ENCODE measurements at regions of chr11 and their contacts with region 1.

Region 1: DNA sequence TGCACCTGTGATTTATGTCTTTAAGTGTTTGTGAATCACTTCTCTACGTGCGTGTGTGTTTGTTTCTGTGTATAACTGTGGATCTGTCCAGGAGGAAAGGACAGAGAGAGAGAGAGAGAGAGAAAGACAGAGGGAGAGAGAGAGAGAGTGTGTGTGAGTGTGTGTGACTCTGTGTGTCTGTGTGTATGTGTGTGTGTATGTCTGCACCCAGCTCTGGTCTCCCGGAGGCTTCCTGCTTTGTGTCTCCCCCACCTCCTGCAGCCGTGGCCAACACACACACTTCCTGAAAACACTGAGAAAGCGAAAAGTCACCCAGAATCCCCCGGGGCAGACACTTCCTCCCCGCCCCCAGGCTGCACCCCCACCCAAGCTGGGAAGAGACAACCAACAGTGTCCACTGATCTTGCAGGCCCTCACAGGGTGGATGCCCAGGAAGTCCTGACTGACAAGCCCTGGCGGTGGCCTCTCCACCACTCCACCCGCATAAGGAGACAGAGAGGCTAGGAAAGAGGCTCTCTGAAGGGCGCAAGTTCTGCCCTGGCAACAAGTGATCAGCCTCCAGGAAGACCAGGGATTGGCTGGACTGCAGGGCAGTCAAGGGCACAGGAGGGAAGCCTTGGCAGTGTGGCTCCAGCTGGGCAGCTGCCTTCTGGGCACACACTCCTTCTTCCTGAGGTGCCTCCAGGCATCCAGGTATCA is 30.0 kb downstream of the ARAP1 start:
- DNase-seq: peak; percentile 90 to 97 (median 95)
- H3K4me3 ChIP-seq: peak overlapping the region; percentile 34 to 80 (median 74)
- H3K27ac ChIP-seq: peak overlapping the region; percentile 73 to 88
- H3K4me1 ChIP-seq: peaks cover 19 to 76% (median 62%) of the 10 kb centered on the region in 4 experiments
- H3K27me3 ChIP-seq: no peaks in the 10 kb centered on the region

Region 2: GRCh38 chr11:72541257-72541974 is 180.8 kb before region 1 on chr11:
- CTCF ChIA-PET with region 1: no interaction called
- POLR2A ChIA-PET with region 1: no interaction called
- DNase-seq: no peak
- H3K4me3 ChIP-seq: no peak overlapping the region
- H3K27ac ChIP-seq: no peak overlapping the region
- H3K4me1 ChIP-seq: no peaks in the 10 kb centered on the region
- H3K27me3 ChIP-seq: peaks cover 0 to 5% (median 2%) of the 10 kb centered on the region in 5 experiments

Region 3: GRCh38 chr11:72657411-72658100 is 64.6 kb before region 1 on chr11:
- CTCF ChIA-PET with region 1: no interaction called
- POLR2A ChIA-PET with region 1: no interaction called
- DNase-seq: no peak
- H3K4me3 ChIP-seq: no peak overlapping the region
- H3K27ac ChIP-seq: no peak overlapping the region
- H3K4me1 ChIP-seq: no peaks in the 10 kb centered on the region
- H3K27me3 ChIP-seq: peaks cover 0 to 5% (median 0%) of the 10 kb centered on the region in 5 experiments

Region 4: GRCh38 chr11:72710278-72710677 is 11.9 kb before region 1 on chr11:
- CTCF ChIA-PET with region 1: no interaction called
- POLR2A ChIA-PET with region 1: no interaction called
- DNase-seq: no peak
- H3K4me3 ChIP-seq: no peak overlapping the region
- H3K27ac ChIP-seq: no peak overlapping the region
- H3K4me1 ChIP-seq: no peaks in the 10 kb centered on the region
- H3K27me3 ChIP-seq: no peaks in the 10 kb centered on the region

Region 5: GRCh38 chr11:72736452-72737069 is 14.4 kb after region 1 on chr11:
- CTCF ChIA-PET with region 1: interaction called, 108 read pairs
- POLR2A ChIA-PET with region 1: interaction called, 3 read pairs
- DNase-seq: peak; percentile 91 to 98 (median 97)
- H3K4me3 ChIP-seq: peak overlapping the region in 4 of 7 experiments; percentile 40 to 62 (median 52)
- H3K27ac ChIP-seq: peak overlapping the region; percentile 87 to 93
- H3K4me1 ChIP-seq: peaks cover 8 to 78% (median 65%) of the 10 kb centered on the region in 4 experiments
- H3K27me3 ChIP-seq: no peaks in the 10 kb centered on the region

Region 6: GRCh38 chr11:72772978-72773690 is 50.9 kb after region 1 on chr11:
- CTCF ChIA-PET with region 1: interaction called, 12 read pairs
- POLR2A ChIA-PET with region 1: interaction called, 3 read pairs
- DNase-seq: peak in 2 of 3 donors; percentile 37 to 50
- H3K4me3 ChIP-seq: no peak overlapping the region
- H3K27ac ChIP-seq: no peak overlapping the region
- H3K4me1 ChIP-seq: peaks cover 0 to 33% (median 4%) of the 10 kb centered on the region in 4 experiments
- H3K27me3 ChIP-seq: no peaks in the 10 kb centered on the region

Region 7: DNA sequence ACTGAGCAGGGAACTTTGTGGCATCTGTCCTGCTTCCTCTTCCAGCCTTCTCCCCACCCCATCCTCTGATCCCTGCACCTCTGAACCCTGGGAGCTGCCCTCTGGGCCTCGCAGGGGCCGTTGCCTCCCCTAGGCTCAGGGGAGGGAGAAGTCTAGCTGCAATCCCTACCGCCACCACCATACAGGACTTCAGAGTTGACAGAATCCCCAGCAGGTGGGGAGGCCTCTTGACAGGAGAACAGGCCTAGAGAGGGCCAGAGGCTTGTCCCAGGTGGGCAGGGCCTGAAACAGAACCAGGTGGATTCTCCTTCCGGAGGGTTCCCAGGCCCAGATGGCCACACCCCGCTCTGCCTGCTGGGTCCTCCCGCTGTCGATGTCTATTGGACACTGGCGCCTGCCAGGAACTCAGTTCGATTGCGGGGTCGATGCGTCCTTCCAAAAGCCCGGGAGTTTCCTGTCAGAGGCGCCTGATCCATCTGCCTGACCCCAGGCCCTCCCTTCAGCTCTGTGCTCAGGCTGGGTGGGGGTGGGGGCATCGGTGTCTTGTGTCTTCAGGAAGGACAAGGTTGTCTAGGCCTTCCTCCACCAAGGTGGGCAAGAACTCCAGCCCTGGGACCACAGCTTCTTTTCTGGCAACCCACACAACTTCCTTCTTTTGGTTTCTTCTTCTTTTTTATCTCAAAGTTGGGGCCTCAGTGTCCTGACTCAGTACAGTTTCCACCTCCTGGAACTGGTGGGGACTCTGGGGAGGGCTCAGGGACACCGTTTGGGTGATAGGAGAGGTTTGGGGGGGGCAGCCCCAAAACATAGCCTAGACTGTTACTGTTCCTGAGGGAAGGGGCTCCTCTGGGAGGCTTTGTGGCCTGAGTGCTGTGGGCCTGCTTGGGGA is 65.3 kb after region 1 on chr11:
- CTCF ChIA-PET with region 1: interaction called, 118 read pairs
- POLR2A ChIA-PET with region 1: interaction called, 3 read pairs
- DNase-seq: peak in 2 of 3 donors; percentile 80 to 83
- H3K4me3 ChIP-seq: peak overlapping the region in 4 of 7 experiments; percentile 9 to 48 (median 29)
- H3K27ac ChIP-seq: peak overlapping the region; percentile 12 to 76
- H3K4me1 ChIP-seq: peaks cover 1 to 36% (median 35%) of the 10 kb centered on the region in 4 experiments
- H3K27me3 ChIP-seq: no peaks in the 10 kb centered on the region

Region 8: DNA sequence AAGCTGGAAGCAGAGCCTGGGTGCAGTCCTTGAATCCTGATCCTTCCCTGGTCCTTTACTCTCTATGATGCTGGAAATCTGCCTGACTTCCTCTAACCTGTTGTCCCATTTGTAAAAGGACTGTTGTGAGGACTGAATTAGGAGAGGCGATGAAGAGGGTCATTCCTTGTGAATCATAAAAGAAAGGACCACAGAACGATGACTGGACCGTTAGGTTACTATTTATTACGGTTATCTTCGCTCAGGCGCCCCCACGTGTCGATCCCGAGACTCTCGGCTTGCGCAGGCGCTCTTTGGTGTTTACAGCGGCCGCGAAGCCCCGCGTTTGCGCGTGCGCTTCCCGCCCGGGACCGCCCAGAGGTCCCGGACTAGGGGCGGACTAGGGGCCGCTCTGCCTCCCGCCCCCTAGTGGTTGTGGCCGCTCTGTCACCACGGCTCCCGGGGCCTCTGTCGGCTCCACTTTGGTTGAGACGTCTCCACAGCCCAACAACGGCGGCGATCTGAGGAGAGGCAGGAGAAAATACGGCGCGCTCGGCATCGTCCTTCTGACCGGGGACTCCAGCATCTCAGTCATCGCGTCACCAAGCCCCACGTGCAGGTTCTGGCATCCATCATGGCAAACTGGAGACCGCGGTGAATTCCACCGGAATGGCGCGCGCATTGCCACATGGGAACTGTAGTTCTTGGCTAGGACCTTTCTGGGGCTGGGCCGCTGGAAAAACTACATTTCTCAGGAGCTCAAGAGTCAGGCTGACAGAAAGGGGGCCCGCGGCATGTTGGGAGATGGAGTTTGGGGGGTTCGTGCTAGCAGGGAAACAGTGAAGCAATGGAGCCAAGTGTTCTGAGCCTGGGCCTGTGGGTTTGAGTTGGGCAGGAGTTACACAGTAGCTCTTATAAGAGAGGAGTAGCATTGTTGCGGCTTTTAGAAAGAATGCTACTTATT is 71.5 kb after region 1 on chr11 and contains the start of gene STARD10:
- CTCF ChIA-PET with region 1: interaction called, 118 read pairs
- POLR2A ChIA-PET with region 1: interaction called, 8 read pairs
- DNase-seq: peak; percentile 93 to 96 (median 95)
- H3K4me3 ChIP-seq: peak within 1 kb of the TSS; percentile 72 to 96 (median 87)
- H3K27ac ChIP-seq: peak within 1 kb of the TSS; percentile 87 to 92
- H3K4me1 ChIP-seq: peaks cover 16 to 46% (median 40%) of the 10 kb centered on the region in 4 experiments
- H3K27me3 ChIP-seq: no peaks in the 10 kb centered on the region

Region 9: GRCh38 chr11:72814286-72815109 is 92.3 kb after region 1 on chr11 and contains the start of gene ATG16L2:
- CTCF ChIA-PET with region 1: interaction called, 41 read pairs
- POLR2A ChIA-PET with region 1: interaction called, 12 read pairs
- DNase-seq: peak; percentile 85 to 92 (median 89)
- H3K4me3 ChIP-seq: peak within 1 kb of the TSS; percentile 80 to 98 (median 88)
- H3K27ac ChIP-seq: peak within 1 kb of the TSS; percentile 97 to 99
- H3K4me1 ChIP-seq: peaks cover 9 to 64% (median 51%) of the 10 kb centered on the region in 4 experiments
- H3K27me3 ChIP-seq: no peaks in the 10 kb centered on the region

Region 10: DNA sequence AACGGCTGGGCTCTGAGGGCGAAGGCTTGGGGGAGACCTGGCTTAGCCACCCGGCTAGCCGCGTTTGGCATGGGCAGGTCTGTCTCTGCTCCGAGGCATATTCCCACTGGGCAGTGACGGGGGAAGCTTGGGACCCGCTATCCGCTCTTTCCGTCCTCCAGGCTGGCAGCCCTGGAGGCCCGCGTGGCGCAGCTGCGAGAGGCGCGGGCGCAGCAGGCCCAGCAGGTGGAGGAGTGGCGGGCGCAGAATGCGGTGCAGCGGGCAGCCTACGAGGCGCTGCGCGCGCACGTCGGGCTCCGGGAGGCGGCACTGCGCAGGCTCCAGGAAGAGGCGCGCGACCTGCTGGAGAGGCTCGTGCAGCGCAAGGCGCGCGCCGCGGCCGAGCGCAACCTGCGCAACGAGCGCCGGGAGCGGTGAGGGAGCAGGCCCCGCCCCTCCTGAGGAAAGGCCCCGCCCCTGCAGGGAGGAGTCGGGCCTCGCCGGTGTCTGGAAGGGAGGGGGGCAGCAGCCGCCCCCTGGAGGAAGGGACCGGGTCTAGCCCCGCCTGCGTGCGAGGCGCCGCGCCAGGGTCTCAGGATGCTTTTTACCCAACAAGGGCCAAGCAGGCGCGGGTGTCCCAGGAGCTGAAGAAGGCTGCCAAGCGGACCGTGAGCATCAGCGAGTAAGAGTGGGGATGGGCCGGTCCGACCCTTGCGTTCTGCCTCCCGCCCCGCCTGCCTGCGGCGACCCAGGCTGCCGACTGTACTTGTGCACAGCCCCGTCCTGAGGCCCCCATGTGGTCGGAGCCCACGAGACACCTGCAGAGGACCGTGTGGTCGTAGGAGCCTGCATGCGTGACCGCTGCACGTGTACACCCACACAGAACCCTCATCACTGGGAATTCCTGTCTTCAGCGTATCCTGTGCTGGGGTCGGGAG is 99.9 kb after region 1 on chr11:
- CTCF ChIA-PET with region 1: interaction called, 14 read pairs
- POLR2A ChIA-PET with region 1: no interaction called
- DNase-seq: peak; percentile 79 to 93 (median 83)
- H3K4me3 ChIP-seq: peak overlapping the region in 2 of 7 experiments; percentile 42 to 46
- H3K27ac ChIP-seq: no peak overlapping the region
- H3K4me1 ChIP-seq: peaks cover 0 to 23% (median 11%) of the 10 kb centered on the region in 4 experiments
- H3K27me3 ChIP-seq: no peaks in the 10 kb centered on the region

Region 11: GRCh38 chr11:72939031-72939430 is 216.8 kb after region 1 on chr11:
- CTCF ChIA-PET with region 1: no interaction called
- POLR2A ChIA-PET with region 1: no interaction called
- DNase-seq: no peak
- H3K4me3 ChIP-seq: no peak overlapping the region
- H3K27ac ChIP-seq: no peak overlapping the region
- H3K4me1 ChIP-seq: peaks cover 3 to 8% (median 6%) of the 10 kb centered on the region in 4 experiments
- H3K27me3 ChIP-seq: no peaks in the 10 kb centered on the region

Measured in common myeloid progenitor, CD34-positive (primary cell).